Vagina (tissue), 2 donors: ENCODE measurements at regions of chr7 and their contacts with region 1.

Region 1: GRCh38 chr7:44748045-44748947 is at the start of gene ZMIZ2:
- DNase-seq: no peak
- H3K4me3 ChIP-seq: peak within 1 kb of the TSS; percentile 79 to 93
- H3K27ac ChIP-seq: peak within 1 kb of the TSS; percentile 91
- H3K4me1 ChIP-seq: peaks cover 35% of the 10 kb centered on the region
- H3K27me3 ChIP-seq: no peaks in the 10 kb centered on the region
- CTCF ChIP-seq: no peak
- POLR2A ChIP-seq: peak in 1 of 2 donors; percentile 40
- total RNA-seq, gene ZMIZ2: 54.3 TPM

Region 2: DNA sequence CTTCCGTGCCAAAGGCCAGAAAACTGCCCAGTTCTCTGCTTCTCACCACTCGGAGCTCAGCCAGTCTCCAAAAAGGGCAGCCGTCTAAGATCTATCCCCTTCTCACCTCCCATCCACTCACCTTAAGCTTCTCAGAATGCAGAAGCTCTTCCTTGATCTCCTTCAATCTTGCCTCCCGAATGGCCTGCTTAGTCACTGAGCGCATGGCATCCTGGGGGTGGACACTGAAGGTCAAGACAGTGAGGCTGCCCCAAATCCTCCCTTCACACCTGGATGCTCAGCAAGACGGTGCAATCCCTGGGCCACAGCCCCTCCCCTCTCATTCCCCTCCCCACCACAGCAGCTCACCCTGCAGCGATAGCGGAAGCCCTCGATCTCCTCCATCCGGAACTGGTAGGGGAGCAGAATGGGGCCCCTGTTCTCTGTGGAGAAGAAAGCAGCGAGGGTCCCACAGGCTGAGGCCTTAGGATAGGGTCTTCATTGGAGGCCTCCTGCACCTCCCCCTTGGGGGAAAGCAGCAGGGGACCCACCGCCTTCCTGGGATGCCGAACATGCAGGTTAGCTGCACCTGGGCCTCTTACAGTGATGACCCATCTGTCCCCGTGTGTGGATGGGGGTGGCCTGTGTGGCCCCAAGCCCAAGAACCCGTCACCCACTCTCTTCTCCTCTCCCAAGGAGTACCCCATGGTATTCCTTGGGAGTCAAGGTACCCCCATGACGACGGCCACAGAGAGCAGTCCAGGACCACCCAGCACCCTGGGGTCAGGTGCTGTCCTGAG is 179.3 kb before region 1 on chr7:
- intact Hi-C with region 1: no loop called
- DNase-seq: peak in 1 of 2 donors; percentile 49
- H3K4me3 ChIP-seq: no peak overlapping the region
- H3K27ac ChIP-seq: no peak overlapping the region
- H3K4me1 ChIP-seq: peaks cover 22% of the 10 kb centered on the region
- H3K27me3 ChIP-seq: no peaks in the 10 kb centered on the region
- CTCF ChIP-seq: no peak
- POLR2A ChIP-seq: no peak

Region 3: GRCh38 chr7:44581879-44582603 is 166.3 kb before region 1 on chr7 and contains the start of gene TMED4:
- intact Hi-C with region 1: loop called (anchors 5 kb)
- DNase-seq: peak in 1 of 2 donors; percentile 99
- H3K4me3 ChIP-seq: peak within 1 kb of the TSS; percentile 91 to 98
- H3K27ac ChIP-seq: peak within 1 kb of the TSS; percentile 92
- H3K4me1 ChIP-seq: peaks cover 25% of the 10 kb centered on the region
- H3K27me3 ChIP-seq: no peaks in the 10 kb centered on the region
- CTCF ChIP-seq: peak in 1 of 3 experiments; percentile 6
- POLR2A ChIP-seq: peak in 1 of 2 donors; percentile 79
- total RNA-seq, gene TMED4: 102 TPM

Region 4: GRCh38 chr7:44767912-44768627 is 19.8 kb after region 1 on chr7:
- intact Hi-C with region 1: loop called (anchors 2 kb)
- DNase-seq: peak in 1 of 2 donors; percentile 90
- H3K4me3 ChIP-seq: peak overlapping the region; percentile 12 to 19
- H3K27ac ChIP-seq: peak overlapping the region; percentile 89
- H3K4me1 ChIP-seq: peaks cover 40% of the 10 kb centered on the region
- H3K27me3 ChIP-seq: no peaks in the 10 kb centered on the region
- CTCF ChIP-seq: no peak
- POLR2A ChIP-seq: peak in 1 of 2 donors; percentile 4

Region 5: GRCh38 chr7:44847508-44847920 is 99.2 kb after region 1 on chr7:
- intact Hi-C with region 1: loop called (anchors 5 kb)
- DNase-seq: peak in 1 of 2 donors; percentile 90
- H3K4me3 ChIP-seq: peak overlapping the region; percentile 54 to 76
- H3K27ac ChIP-seq: peak overlapping the region; percentile 96
- H3K4me1 ChIP-seq: peaks cover 34% of the 10 kb centered on the region
- H3K27me3 ChIP-seq: no peaks in the 10 kb centered on the region
- CTCF ChIP-seq: peak; percentile 72 to 81 (median 72)
- POLR2A ChIP-seq: no peak